HEK293 (cell line): ENCODE measurements at regions of chr7 and their contacts with region 1.

Region 1: DNA sequence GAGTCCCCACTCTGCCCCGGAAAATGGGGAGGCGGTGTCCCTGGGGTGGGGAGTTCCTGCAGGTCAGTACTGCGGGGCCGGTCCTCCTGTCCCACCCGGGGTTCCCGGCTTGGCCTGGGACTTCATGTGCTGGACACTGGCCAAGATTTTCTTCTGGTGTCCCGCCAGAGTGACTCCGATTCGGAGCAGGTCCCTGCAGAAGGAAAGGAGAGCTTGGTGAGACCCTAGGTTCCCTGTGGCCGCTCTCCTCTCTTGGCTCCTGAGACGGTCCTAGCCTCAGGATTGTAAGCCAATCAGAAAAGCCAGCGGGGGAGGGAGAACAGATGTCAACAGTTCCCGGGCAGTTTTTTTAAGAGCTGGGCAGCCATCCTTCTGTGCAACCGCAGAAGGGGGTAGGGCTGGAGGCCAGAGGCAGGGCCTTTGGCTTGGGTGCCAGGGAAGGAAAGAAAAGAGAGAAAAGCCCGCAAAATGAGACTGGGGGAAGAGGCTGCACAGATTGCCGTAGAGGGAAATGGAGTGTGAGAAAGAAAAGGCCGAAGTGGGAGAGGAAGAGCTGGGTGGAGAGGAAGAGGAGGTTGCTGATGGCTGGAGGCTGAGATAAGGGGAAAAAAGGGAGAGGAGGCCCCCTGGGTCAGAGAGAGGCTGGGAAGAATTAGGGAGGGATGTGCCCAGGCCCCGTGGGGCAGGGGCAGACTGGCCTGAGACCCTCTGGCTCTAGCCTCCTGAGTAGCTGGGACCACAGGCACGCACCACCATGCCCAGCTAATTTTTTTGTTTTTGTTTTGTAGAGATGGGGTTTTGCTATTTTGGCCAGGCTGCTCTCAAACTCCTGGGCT is 23.7 kb downstream of the EPHB4 start:
- H3K4me3 ChIP-seq: no peak overlapping the region
- H3K27ac ChIP-seq: 0 out of 2 replicates have a peak overlapping the region, but pooled peaks have one; percentile 41
- H3K4me1 ChIP-seq: peaks cover 9% of the 10 kb centered on the region
- CTCF ChIP-seq: no peak

Region 2: GRCh38 chr7:100670074-100670473 is 133.5 kb before region 1 on chr7:
- CTCF ChIA-PET with region 1: no interaction called
- POLR2A ChIA-PET with region 1: no interaction called
- H3K4me3 ChIP-seq: no peak overlapping the region
- H3K27ac ChIP-seq: no peak overlapping the region
- H3K4me1 ChIP-seq: no peaks in the 10 kb centered on the region
- CTCF ChIP-seq: no peak

Region 3: GRCh38 chr7:100837099-100837836 is 33.7 kb after region 1 on chr7:
- CTCF ChIA-PET with region 1: interaction called, 14 read pairs
- POLR2A ChIA-PET with region 1: no interaction called
- H3K4me3 ChIP-seq: peak overlapping the region; percentile 28
- H3K27ac ChIP-seq: peak overlapping the region; percentile 91
- H3K4me1 ChIP-seq: peaks cover 9% of the 10 kb centered on the region
- CTCF ChIP-seq: no peak